ENCODE measurements at regions of chr3 and their contacts with region 1.

Region 1: GRCh38 chr3:134212906-134213665 is 37.6 kb downstream of the RYK start:
- DNase-seq: peak; percentile 81
- ATAC-seq: peak; percentile 86
- H3K4me3 ChIP-seq: no peak overlapping the region
- H3K4me3 Mint-ChIP-seq: no peak overlapping the region
- H3K27ac ChIP-seq: no peak overlapping the region
- H3K27ac Mint-ChIP-seq: no peak overlapping the region
- H3K4me1 ChIP-seq: no peaks in the 10 kb centered on the region
- H3K4me1 Mint-ChIP-seq: peaks cover 15% of the 10 kb centered on the region
- H3K27me3 ChIP-seq: no peaks in the 10 kb centered on the region
- H3K27me3 Mint-ChIP-seq: no peaks in the 10 kb centered on the region
- CTCF ChIP-seq: peak; percentile 99

Region 2: GRCh38 chr3:133192363-133192945 is 1020.6 kb before region 1 on chr3:
- CTCF ChIA-PET with region 1: no interaction called
- POLR2A ChIA-PET with region 1: no interaction called
- intact Hi-C with region 1: no loop called
- DNase-seq: no peak
- ATAC-seq: no peak
- H3K4me3 ChIP-seq: no peak overlapping the region
- H3K4me3 Mint-ChIP-seq: no peak overlapping the region
- H3K27ac ChIP-seq: no peak overlapping the region
- H3K27ac Mint-ChIP-seq: no peak overlapping the region
- H3K4me1 ChIP-seq: no peaks in the 10 kb centered on the region
- H3K4me1 Mint-ChIP-seq: no peaks in the 10 kb centered on the region
- H3K27me3 ChIP-seq: peaks cover 0 to 3% (median 1%) of the 10 kb centered on the region in 4 experiments
- H3K27me3 Mint-ChIP-seq: peaks cover 17% of the 10 kb centered on the region
- CTCF ChIP-seq: no peak

Region 3: GRCh38 chr3:134228035-134228434 is 14.9 kb after region 1 on chr3:
- CTCF ChIA-PET with region 1: interaction called, 66 read pairs
- POLR2A ChIA-PET with region 1: no interaction called
- intact Hi-C with region 1: loop called (anchors 1 kb)
- DNase-seq: no peak
- ATAC-seq: no peak
- H3K4me3 ChIP-seq: no peak overlapping the region
- H3K4me3 Mint-ChIP-seq: no peak overlapping the region
- H3K27ac ChIP-seq: no peak overlapping the region
- H3K27ac Mint-ChIP-seq: no peak overlapping the region
- H3K4me1 ChIP-seq: peaks cover 18 to 25% of the 10 kb centered on the region in 2 donors
- H3K4me1 Mint-ChIP-seq: peaks cover 53% of the 10 kb centered on the region
- H3K27me3 ChIP-seq: no peaks in the 10 kb centered on the region
- H3K27me3 Mint-ChIP-seq: no peaks in the 10 kb centered on the region
- CTCF ChIP-seq: no peak

Region 4: DNA sequence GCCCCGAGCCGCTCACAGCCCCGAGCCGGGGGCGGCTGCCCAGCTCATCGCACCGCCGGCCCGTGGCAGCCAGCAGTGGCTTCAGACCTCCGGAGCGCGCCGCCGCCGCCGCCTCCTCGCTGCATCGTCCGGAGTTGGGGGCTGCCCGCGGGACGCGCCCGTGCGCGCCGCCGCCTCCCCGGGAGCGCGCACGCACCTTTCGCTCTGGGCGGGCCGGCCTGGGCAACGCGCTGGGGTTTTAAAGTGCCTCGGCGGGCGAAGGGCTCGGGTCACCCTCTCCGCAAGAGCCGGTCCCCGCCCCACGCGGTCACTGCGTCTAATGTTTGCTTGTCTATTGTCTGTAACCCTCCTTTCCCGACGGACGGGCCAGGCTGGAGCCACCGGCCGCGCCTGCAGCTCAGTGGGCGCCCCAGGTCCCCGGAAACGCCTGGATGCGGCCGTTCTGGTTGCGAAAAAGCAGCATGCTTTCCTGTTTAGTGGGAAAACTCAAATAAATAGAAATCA is 37.7 kb after region 1 on chr3 and contains the start of gene RYK:
- CTCF ChIA-PET with region 1: interaction called, 25 read pairs
- POLR2A ChIA-PET with region 1: no interaction called
- intact Hi-C with region 1: loop called (anchors 2 kb)
- DNase-seq: peak; percentile 90
- ATAC-seq: peak; percentile 73
- H3K4me3 ChIP-seq: peak within 1 kb of the TSS; percentile 69 to 90 (median 74)
- H3K4me3 Mint-ChIP-seq: peak within 1 kb of the TSS; percentile 93
- H3K27ac ChIP-seq: peak within 1 kb of the TSS; percentile 71 to 82
- H3K27ac Mint-ChIP-seq: peak within 1 kb of the TSS; percentile 93
- H3K4me1 ChIP-seq: peaks cover 29 to 30% of the 10 kb centered on the region in 2 donors
- H3K4me1 Mint-ChIP-seq: peaks cover 49% of the 10 kb centered on the region
- H3K27me3 ChIP-seq: no peaks in the 10 kb centered on the region
- H3K27me3 Mint-ChIP-seq: no peaks in the 10 kb centered on the region
- CTCF ChIP-seq: no peak
- total RNA-seq, gene RYK: 63.9 and 67.7 TPM in 2 replicates

Region 5: GRCh38 chr3:134291319-134292254 is 78.5 kb after region 1 on chr3:
- CTCF ChIA-PET with region 1: no interaction called
- POLR2A ChIA-PET with region 1: no interaction called
- intact Hi-C with region 1: no loop called
- DNase-seq: no peak
- ATAC-seq: no peak
- H3K4me3 ChIP-seq: no peak overlapping the region
- H3K4me3 Mint-ChIP-seq: no peak overlapping the region
- H3K27ac ChIP-seq: no peak overlapping the region
- H3K27ac Mint-ChIP-seq: no peak overlapping the region
- H3K4me1 ChIP-seq: peaks cover 8 to 9% of the 10 kb centered on the region in 2 donors
- H3K4me1 Mint-ChIP-seq: no peaks in the 10 kb centered on the region
- H3K27me3 ChIP-seq: peaks cover 0 to 4% (median 2%) of the 10 kb centered on the region in 4 experiments
- H3K27me3 Mint-ChIP-seq: peaks cover 24% of the 10 kb centered on the region
- CTCF ChIP-seq: no peak

Region 6: DNA sequence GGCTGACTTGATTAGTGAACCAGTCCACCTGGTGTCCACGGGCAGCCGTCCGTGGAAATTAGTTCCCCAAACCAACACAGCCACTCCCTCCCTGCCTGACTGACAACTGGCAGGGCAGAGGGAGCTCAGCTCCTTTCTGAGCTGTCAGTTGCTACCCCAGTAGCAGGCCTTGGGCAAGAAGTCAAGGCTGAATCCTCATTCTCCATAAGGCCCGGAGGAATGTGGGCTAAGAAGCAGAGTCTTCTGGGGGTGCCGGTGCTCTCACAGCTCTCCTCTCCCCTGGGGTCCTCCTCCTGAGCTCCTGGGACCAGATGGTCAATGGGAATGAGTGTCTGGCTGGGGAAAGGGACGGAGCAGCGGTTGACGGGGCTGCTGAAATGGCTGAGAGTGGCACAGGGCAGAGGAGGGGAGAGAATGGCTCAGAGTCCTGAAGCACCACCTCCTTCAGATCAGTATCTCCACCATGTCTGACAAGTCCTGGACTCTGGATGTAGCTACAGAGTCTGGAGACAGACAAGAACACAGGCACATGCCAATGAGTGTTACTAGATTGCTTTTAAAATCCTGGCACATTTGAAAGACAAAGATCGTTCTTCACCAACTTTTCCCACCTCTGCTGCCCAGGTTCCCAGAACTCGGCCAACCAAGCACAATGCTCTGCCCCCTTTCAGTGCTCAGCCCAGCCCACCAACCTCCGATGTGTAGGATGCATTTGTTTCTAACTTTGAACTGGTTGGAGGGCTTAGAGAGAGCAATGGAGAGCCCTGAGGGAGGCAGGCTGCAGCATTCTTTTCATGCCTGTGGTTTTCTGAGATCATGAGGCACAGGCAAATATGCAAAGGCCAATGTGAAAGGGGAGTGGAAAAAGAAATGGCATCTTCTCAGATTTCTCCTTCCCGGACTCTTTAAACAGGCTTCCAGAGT is 144.4 kb after region 1 on chr3:
- CTCF ChIA-PET with region 1: no interaction called
- POLR2A ChIA-PET with region 1: no interaction called
- intact Hi-C with region 1: loop called (anchors 5 kb)
- DNase-seq: no peak
- ATAC-seq: no peak
- H3K4me3 ChIP-seq: no peak overlapping the region
- H3K4me3 Mint-ChIP-seq: no peak overlapping the region
- H3K27ac ChIP-seq: no peak overlapping the region
- H3K27ac Mint-ChIP-seq: no peak overlapping the region
- H3K4me1 ChIP-seq: no peaks in the 10 kb centered on the region
- H3K4me1 Mint-ChIP-seq: no peaks in the 10 kb centered on the region
- H3K27me3 ChIP-seq: peaks cover 0 to under 1% (median 0%) of the 10 kb centered on the region in 4 experiments
- H3K27me3 Mint-ChIP-seq: peaks cover 10% of the 10 kb centered on the region
- CTCF ChIP-seq: no peak

Region 7: DNA sequence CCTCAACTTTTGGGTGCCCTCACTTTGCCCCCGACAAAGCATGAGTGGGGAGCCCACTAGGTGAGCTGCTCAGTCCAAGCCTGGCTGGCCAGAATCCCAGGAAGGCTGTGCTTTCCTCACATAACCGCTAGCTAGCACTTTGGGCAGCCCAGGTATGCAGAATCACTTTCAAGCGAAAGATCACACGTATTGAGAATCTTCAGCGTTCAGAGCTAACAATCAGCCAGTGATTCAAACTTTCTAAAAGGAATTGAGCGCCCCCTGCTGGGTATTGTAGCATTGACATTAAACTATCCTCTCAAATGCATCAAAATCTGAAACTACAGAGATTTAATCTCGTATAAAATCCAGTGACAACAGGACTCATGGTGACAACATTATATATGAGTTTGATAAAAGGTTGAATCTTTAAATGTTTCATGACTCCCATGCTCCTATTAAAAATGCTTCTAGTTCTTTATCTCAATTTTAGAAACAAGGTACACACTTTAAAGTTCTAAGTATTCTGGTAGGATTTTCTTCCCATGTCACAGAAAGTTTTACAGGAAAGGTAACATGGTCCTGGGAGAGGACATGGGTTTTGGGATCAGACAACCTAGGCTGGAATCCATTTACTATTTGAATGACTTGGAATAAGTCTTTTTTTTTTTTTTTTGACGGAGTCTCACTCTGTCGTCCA is 260.9 kb after region 1 on chr3:
- CTCF ChIA-PET with region 1: interaction called, 189 read pairs
- POLR2A ChIA-PET with region 1: no interaction called
- intact Hi-C with region 1: loop called (anchors 1 kb)
- DNase-seq: peak; percentile 76
- ATAC-seq: peak; percentile 58
- H3K4me3 ChIP-seq: no peak overlapping the region
- H3K4me3 Mint-ChIP-seq: no peak overlapping the region
- H3K27ac ChIP-seq: no peak overlapping the region
- H3K27ac Mint-ChIP-seq: no peak overlapping the region
- H3K4me1 ChIP-seq: no peaks in the 10 kb centered on the region
- H3K4me1 Mint-ChIP-seq: no peaks in the 10 kb centered on the region
- H3K27me3 ChIP-seq: no peaks in the 10 kb centered on the region
- H3K27me3 Mint-ChIP-seq: no peaks in the 10 kb centered on the region
- CTCF ChIP-seq: peak; percentile 81

Measured in B cell (primary cell).